ENCODE measurements at regions of chr7 and their contacts with region 1.

Region 1: GRCh38 chr7:99551767-99552463 is at the start of gene FAM200A:
- DNase-seq: peak; percentile 89
- H3K4me3 Mint-ChIP-seq: peak within 1 kb of the TSS; percentile 88
- H3K27ac Mint-ChIP-seq: peak within 1 kb of the TSS; percentile 87
- H3K4me1 Mint-ChIP-seq: peaks cover 32% of the 10 kb centered on the region
- H3K27me3 Mint-ChIP-seq: no peaks in the 10 kb centered on the region
- total RNA-seq, gene FAM200A: 3.3 to 3.8 TPM

Region 2: DNA sequence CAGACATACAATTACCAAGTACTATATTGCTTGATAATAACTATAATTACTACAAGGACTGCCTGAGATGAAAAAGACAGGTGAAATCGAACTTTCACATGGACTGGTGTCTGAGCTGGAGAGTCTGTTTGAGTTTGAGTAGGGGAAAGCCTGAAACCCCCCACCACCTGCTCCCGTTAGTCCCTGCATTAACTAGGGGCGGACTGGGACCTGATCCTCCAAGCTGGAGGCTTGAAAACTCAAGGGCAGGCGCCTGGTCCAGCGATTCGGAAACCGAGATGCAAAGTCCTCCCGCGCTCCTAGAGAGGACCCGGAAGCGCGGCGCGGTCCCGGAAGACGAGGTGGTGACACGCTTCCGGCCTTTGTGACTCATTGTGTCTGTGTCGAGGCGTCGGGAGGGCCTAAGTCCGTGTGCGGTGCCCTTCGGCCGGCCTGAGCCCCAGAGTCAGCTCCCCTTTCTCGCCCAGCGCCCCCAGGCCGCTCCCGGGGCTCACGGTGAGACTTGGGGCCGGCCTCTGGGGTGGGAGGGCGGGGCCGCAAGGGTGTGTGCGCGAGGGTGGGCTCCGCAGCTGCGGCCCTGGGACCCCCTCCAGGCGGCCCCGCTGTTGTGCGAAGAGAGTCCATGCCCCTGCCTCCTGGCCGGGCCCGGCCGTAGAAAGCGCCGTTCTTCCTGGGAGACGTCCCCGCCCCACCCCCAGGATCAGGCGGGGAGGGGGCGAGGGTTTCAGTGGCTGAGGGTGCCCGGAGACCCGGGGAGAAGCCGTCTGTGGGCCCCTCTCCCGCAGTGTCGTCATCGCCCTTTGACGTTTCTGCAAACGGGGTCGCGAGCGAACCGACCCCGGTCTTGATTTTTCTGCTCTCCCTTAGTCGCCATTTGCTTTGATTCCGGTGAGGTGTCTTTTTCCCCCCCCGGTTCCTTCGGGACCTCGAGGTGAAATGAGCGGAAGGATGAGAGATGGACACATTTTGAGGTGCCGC is 463.6 kb after region 1 on chr7 and contains the start of gene ZKSCAN1:
- CTCF ChIA-PET with region 1: no interaction called
- intact Hi-C with region 1: loop called (anchors 10 kb)
- DNase-seq: peak; percentile 89
- H3K4me3 Mint-ChIP-seq: peak within 1 kb of the TSS; percentile 88
- H3K27ac Mint-ChIP-seq: peak within 1 kb of the TSS; percentile 91
- H3K4me1 Mint-ChIP-seq: peaks cover 64% of the 10 kb centered on the region
- H3K27me3 Mint-ChIP-seq: no peaks in the 10 kb centered on the region
- total RNA-seq, gene ZKSCAN1: 64.4 to 67.9 TPM

Measured in activated naive CD4-positive, alpha-beta T cell treated with anti-CD3 and anti-CD28 coated beads for 36 hours (primary cell).